Posterior cingulate gyrus (tissue), 11 donors: ENCODE measurements at regions of chr22 and their contacts with region 1.

Region 1: GRCh38 chr22:17638432-17639246 is at the start of gene BCL2L13:
- DNase-seq: peak; percentile 81 to 98 (median 90)

Region 2: DNA sequence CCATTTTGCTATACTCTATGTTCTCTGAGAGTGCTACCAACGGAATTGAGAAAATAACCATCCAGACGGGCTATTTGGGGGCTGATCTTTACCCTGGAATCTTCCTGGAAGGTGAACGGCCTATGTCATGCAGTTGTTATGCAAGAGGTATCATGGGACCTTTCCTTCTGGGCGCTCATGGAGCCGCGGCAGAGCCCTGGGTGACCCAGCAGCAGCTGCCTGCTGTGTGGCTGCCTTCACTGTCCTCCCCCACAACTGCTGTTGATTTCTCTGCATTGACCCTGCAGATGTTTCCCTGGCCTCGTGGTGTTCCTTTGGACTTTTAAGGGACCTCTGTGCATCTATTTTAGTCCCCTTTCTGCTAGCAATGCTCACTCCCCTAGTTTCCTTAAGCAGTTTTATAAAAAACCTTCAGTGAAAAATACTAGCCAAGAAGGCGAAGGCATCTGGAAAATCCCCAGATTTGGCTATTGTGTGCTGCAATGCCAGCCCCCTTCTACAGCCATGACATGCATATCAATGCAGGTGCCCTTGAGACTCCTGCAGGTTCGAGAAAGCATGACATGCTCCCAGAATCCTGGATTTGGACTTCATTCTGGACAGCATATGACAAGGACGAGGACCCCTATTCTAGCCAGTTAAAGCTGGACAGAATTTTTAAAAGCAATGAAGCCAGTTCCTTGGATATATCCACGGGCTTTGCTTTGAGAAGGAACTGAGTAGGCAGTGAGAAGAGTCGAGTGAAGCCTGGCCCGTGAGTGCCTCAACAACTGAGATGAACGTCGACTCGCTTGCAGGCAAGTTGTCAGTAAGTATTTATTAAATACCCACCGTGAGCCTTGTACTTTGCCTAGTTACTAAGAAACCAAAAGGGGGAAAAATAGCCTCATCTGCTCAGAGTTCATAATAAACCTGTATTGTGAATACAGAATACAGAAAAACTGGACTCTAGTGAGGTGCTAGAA is 75.5 kb before region 1 on chr22 and contains the start of gene SLC25A18:
- intact Hi-C with region 1: loop called (anchors 10 kb)
- DNase-seq: peak in 5 of 10 donors; percentile 34 to 91 (median 50)

Region 3: DNA sequence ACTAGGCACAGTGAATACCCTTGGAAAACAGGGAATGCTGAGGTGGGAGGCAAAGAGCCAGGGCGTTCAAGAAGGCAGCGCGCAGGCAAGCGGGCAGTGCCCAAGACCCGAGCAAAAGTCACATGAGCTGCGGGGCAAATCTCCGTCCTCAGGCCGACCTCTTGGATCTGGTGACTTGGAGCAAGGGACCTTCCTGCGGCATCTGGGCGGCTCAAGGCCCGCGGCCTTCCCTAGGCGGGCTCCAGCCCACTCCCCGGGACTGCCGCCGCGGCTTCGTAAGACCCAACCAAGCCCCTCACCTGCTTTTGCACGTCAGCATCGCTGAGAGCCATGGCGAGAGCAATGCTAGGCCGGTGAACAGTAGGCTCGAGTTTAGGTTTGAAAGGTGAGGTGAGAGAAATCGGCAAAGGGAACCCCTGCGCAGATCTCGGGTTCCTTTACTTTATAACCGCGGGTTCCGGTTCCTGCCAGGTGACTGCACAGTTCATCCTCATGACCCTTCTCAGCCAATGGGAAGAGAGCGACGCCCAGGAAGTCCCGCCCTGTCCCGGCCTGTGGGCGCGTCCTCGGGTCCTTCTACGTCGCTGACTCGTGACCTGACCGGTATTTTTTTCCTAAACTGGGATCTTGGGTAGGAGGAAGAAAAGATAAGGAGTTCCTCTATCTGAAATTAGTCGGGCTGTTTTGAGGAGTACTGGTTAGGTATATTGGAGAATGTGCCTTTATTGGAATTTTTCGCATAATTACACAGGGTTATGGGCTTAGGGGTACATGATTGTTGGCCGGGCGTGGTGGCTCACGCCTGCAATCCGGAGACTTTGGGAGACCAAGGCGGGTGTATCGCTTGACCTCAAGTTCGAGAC is 10.1 kb before region 1 on chr22 and contains the start of gene ATP6V1E1:
- intact Hi-C with region 1: loop called (anchors 1 kb)
- DNase-seq: peak; percentile 94 to 99 (median 98)